ENCODE measurements at regions of chr9 and their contacts with region 1.

Region 1: GRCh38 chr9:89549031-89549644 is 51.2 kb upstream of the SEMA4D start:
- DNase-seq: peak; percentile 89
- CTCF ChIP-seq: peak; percentile 95

Region 2: DNA sequence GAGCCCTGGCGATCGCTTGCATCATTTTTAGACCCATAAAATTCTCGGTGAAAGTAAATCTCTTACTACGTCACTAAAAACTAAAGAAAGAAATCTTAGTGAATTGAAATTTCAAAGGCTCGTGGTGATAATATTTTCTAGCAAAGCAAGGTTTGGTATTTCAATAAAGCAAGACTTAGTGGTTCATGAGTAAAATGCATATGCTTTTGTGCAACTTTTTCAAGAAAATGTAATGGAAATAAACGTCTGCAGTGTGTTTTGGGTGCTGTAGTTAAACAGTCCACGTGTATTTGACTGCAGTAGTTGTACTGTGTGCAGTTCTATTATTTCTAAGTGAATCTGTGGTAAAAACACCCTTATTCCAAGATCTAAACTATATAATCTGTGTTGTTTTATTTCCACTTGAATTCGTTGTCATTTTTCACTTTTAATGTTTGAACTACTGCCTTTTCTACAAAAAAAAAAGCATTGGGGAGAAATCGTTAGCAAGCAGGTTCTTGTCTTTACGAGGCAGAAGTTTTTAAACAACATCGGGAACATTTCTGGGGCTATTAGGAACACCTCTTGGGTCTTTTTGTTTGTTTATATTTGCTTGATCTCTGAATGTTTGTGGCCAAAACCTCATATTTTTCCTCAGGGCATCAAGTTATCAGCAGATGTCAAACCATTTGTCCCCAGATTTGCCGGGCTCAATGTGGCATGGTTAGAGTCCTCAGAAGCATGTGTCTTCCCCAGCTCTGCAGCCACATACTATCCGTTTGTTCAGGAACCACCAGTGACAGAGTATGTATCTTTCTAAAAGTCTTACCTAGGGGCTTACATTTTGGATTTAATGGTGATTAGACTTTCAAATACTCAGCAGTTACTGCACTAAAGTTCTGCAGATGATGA is 229.9 kb before region 1 on chr9:
- CTCF ChIA-PET with region 1: interaction called, 12 read pairs
- POLR2A ChIA-PET with region 1: no interaction called
- DNase-seq: no peak
- CTCF ChIP-seq: no peak

Region 3: DNA sequence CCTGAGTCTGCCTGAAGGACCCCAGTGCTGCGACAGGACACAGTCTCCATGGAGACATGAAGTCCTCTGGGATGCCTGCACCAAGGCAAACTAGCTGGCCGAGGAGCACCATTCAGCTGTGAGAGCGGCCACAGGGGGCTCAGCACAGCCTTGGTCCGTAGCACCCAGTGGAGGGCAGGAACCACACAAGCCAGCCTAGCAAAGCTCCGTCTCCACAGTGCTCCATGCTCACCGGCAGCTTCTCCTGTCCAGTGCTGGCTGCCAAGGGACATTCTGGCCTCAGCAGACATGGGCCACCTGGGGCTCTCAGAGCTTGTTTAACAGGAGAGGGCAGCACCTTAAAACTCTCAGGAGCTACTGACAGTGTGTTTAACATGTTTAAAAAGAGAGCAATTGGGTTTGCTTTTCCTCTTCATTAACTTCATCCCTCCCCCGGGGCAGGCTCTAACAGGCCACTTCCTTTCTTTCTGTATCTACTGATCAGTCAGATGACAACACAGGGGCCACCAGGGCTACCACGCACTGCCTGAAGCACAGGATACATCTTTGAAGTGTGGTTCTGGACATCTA is 173.9 kb before region 1 on chr9:
- CTCF ChIA-PET with region 1: interaction called, 28 read pairs
- POLR2A ChIA-PET with region 1: no interaction called
- DNase-seq: peak; percentile 71
- CTCF ChIP-seq: peak; percentile 14

Region 4: GRCh38 chr9:89410641-89411350 is 138.3 kb before region 1 on chr9:
- CTCF ChIA-PET with region 1: interaction called, 15 read pairs
- POLR2A ChIA-PET with region 1: no interaction called
- DNase-seq: peak; percentile 80
- CTCF ChIP-seq: peak; percentile 14

Region 5: GRCh38 chr9:89442981-89443814 is 105.9 kb before region 1 on chr9:
- CTCF ChIA-PET with region 1: interaction called, 19 read pairs
- POLR2A ChIA-PET with region 1: no interaction called
- DNase-seq: peak; percentile 64
- CTCF ChIP-seq: no peak

Region 6: GRCh38 chr9:89522261-89522958 is 26.7 kb before region 1 on chr9:
- CTCF ChIA-PET with region 1: interaction called, 45 read pairs
- POLR2A ChIA-PET with region 1: interaction called, 5 read pairs
- DNase-seq: peak; percentile 81
- CTCF ChIP-seq: no peak

Region 7: DNA sequence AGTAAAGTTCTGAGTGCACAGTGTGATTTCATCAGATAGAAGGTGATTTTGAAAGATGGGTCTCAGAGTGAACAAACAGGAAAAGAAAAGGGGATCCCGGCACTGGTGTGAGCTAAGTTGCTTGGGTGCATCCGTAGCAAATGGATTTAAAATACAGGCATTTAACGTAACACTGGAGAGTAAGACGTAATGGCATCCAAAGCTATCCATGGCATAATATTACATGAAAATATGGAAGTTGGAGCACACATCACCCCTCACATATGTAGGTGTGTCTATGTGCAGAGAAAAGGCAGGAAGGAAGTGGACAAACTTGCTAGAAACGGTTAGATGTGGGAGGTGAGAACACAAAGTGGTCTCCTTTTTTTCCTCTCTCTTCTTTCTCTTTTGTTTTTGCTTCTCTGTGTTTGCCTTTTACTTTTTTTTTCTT is 13.0 kb before region 1 on chr9:
- CTCF ChIA-PET with region 1: interaction called, 44 read pairs
- POLR2A ChIA-PET with region 1: no interaction called
- DNase-seq: peak; percentile 53
- CTCF ChIP-seq: no peak

Region 8: GRCh38 chr9:89770531-89771174 is 221.5 kb after region 1 on chr9:
- CTCF ChIA-PET with region 1: no interaction called
- POLR2A ChIA-PET with region 1: no interaction called
- DNase-seq: no peak
- CTCF ChIP-seq: no peak

Region 9: DNA sequence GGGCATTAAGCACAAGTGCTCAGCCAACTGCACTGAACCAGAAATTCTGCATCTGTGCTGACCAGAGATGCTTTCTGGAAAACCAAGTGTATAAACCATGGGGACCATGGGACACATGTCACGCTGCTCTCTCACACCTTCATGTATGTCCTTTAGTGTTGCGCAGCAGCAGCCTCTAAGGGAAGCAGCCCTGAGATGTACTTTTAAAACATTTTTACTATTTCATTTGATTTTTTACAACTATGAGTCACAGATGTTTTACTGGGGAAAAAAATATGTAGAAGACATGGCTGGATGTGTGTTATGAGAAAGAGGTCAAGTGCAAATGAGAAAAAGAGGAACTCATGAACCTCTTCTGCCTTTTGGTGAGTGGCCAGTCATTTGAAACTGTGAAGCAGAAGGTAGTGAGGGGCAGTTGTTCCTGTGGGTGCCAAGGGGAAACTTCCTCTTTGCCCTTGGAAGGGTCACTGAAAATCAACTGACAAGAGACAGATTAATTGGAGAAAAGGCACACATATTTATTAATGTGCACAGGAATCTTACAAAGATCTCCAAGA is 1221.1 kb after region 1 on chr9:
- CTCF ChIA-PET with region 1: no interaction called
- POLR2A ChIA-PET with region 1: no interaction called
- DNase-seq: peak; percentile 54
- CTCF ChIP-seq: no peak

Measured in GM10248 (cell line).